CD14-positive monocyte (primary cell): ENCODE measurements at regions of chr13 and their contacts with region 1.

Region 1: DNA sequence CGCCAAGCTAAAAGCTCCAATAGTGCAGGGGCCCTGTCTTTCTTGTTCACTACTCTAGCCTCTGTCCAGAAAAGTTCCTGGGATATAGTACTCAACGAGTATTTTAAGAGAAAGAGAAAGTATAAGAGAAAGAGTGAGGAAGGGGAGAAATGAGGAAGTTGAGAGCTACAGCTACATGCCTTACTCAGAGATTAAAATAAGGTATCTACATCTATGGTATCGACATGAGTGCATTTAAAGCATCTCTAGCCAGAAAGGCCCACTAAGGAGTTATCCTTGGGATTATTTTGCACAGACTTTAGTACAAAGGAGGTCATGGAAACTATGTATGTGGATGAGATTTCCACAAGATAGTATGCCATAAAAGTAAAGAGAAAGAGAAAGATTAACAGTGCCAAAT is 28.5 kb downstream of the MYCBP2 start:
- DNase-seq: peak in 2 of 3 donors; percentile 54 to 59
- H3K4me3 ChIP-seq: peak overlapping the region; percentile 26 to 70 (median 69)
- H3K4me3 Mint-ChIP-seq: peak overlapping the region; percentile 32 to 61
- H3K27ac ChIP-seq: peak overlapping the region in 1 of 2 donors; percentile 81
- H3K27ac Mint-ChIP-seq: peak overlapping the region; percentile 20 to 88 (median 70)
- H3K4me1 ChIP-seq: peaks cover 30 to 43% of the 10 kb centered on the region in 2 donors
- H3K4me1 Mint-ChIP-seq: peaks cover 44% of the 10 kb centered on the region
- H3K27me3 ChIP-seq: no peaks in the 10 kb centered on the region
- H3K27me3 Mint-ChIP-seq: no peaks in the 10 kb centered on the region
- CTCF ChIP-seq: no peak

Region 2: GRCh38 chr13:77345150-77345780 is 46.8 kb after region 1 on chr13:
- intact Hi-C with region 1: loop called in 1 of 2 experiments (anchors 10 kb)
- DNase-seq: peak in 1 of 3 donors; percentile 30
- H3K4me3 ChIP-seq: no peak overlapping the region
- H3K4me3 Mint-ChIP-seq: no peak overlapping the region
- H3K27ac ChIP-seq: peak overlapping the region in 1 of 2 donors; percentile 9
- H3K27ac Mint-ChIP-seq: peak overlapping the region in 4 of 7 donors; percentile 20 to 61 (median 48)
- H3K4me1 ChIP-seq: peaks cover 21 to 28% of the 10 kb centered on the region in 2 donors
- H3K4me1 Mint-ChIP-seq: peaks cover 40% of the 10 kb centered on the region
- H3K27me3 ChIP-seq: no peaks in the 10 kb centered on the region
- H3K27me3 Mint-ChIP-seq: no peaks in the 10 kb centered on the region
- CTCF ChIP-seq: no peak

Region 3: GRCh38 chr13:77360032-77360685 is 61.7 kb after region 1 on chr13:
- intact Hi-C with region 1: no loop called
- DNase-seq: peak in 2 of 3 donors; percentile 38 to 53
- H3K4me3 ChIP-seq: peak overlapping the region in 1 of 3 experiments; percentile 11
- H3K4me3 Mint-ChIP-seq: peak overlapping the region in 1 of 2 donors; percentile 17
- H3K27ac ChIP-seq: peak overlapping the region in 1 of 2 donors; percentile 70
- H3K27ac Mint-ChIP-seq: peak overlapping the region in 5 of 7 donors; percentile 20 to 73 (median 64)
- H3K4me1 ChIP-seq: peaks cover 13 to 22% of the 10 kb centered on the region in 2 donors
- H3K4me1 Mint-ChIP-seq: peaks cover 28% of the 10 kb centered on the region
- H3K27me3 ChIP-seq: no peaks in the 10 kb centered on the region
- H3K27me3 Mint-ChIP-seq: peaks cover 0 to 3% (median 0%) of the 10 kb centered on the region in 3 donors
- CTCF ChIP-seq: no peak